ENCODE measurements at regions of chr10 and their contacts with region 1.

Region 1: GRCh38 chr10:114615600-114616007 is 42.5 kb downstream of the ABLIM1 start:
- DNase-seq: peak; percentile 68
- H3K4me3 Mint-ChIP-seq: peak overlapping the region; percentile 17
- H3K27ac Mint-ChIP-seq: peak overlapping the region; percentile 50
- H3K4me1 Mint-ChIP-seq: peaks cover 16% of the 10 kb centered on the region
- H3K27me3 Mint-ChIP-seq: peaks cover 4% of the 10 kb centered on the region

Region 2: GRCh38 chr10:114499630-114500190 is 115.9 kb before region 1 on chr10:
- intact Hi-C with region 1: loop called (anchors 5 kb)
- DNase-seq: peak; percentile 87
- H3K4me3 Mint-ChIP-seq: peak overlapping the region; percentile 64
- H3K27ac Mint-ChIP-seq: peak overlapping the region; percentile 89
- H3K4me1 Mint-ChIP-seq: peaks cover 63% of the 10 kb centered on the region
- H3K27me3 Mint-ChIP-seq: no peaks in the 10 kb centered on the region

Region 3: DNA sequence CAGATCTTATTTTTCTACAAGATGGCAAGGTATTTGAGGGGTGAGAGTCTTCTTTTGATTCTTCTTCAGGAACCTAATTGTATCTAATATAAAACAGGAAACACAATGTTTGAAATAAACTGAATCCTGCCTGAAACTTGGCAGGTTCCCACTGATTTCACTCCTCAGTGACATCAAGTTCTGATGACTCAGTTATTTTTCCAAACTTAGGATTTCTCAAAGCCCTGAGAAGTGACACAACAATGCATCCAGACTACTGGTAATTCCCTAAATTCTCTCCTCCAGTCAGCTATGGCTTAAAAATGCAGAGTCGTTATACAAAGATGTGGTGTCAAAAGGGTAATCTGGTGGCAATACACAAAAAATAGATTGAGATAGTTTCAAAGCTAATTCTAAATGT is 38.5 kb before region 1 on chr10:
- intact Hi-C with region 1: no loop called
- DNase-seq: no peak
- H3K4me3 Mint-ChIP-seq: no peak overlapping the region
- H3K27ac Mint-ChIP-seq: no peak overlapping the region
- H3K4me1 Mint-ChIP-seq: no peaks in the 10 kb centered on the region
- H3K27me3 Mint-ChIP-seq: peaks cover 8% of the 10 kb centered on the region

Region 4: DNA sequence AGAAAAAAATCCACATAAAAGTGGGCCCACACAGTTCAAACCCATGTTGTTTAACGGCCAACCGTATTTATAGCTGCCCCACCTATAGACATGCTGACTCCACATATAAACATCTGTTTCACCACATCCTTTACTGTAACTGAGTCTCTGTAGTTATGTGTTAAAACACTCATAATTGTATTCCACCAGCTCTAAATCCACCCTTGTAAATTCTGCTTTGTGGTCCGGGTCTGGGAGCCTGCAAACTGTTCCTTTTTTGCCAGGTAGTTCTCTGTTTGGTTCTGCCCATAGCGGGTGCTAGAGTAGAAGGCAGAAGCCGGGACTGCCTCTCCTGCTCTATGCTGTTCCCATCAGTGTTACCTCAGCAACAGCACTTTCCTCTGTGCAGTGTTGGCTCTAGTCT is 185.8 kb after region 1 on chr10:
- intact Hi-C with region 1: loop called (anchors 10 kb)
- DNase-seq: peak; percentile 83
- H3K4me3 Mint-ChIP-seq: peak overlapping the region; percentile 74
- H3K27ac Mint-ChIP-seq: peak overlapping the region; percentile 82
- H3K4me1 Mint-ChIP-seq: peaks cover 34% of the 10 kb centered on the region
- H3K27me3 Mint-ChIP-seq: no peaks in the 10 kb centered on the region

Measured in activated CD4-positive, alpha-beta T cell treated with anti-CD3 and anti-CD28 coated beads, Interleukin-2, amount 10 ng/mL, durations not matched to agents 24 days and 14 days (primary cell).